Panc1 (cell line): ENCODE measurements at regions of chr13 and their contacts with region 1.

Region 1: GRCh38 chr13:79533781-79534400 is 52.9 kb downstream of the NDFIP2 start:
- DNase-seq: no peak
- ATAC-seq: no peak
- H3K4me3 ChIP-seq: no peak overlapping the region
- H3K27ac ChIP-seq: no peak overlapping the region
- H3K4me1 ChIP-seq: no peaks in the 10 kb centered on the region
- H3K27me3 ChIP-seq: no peaks in the 10 kb centered on the region
- CTCF ChIP-seq: no peak

Region 2: DNA sequence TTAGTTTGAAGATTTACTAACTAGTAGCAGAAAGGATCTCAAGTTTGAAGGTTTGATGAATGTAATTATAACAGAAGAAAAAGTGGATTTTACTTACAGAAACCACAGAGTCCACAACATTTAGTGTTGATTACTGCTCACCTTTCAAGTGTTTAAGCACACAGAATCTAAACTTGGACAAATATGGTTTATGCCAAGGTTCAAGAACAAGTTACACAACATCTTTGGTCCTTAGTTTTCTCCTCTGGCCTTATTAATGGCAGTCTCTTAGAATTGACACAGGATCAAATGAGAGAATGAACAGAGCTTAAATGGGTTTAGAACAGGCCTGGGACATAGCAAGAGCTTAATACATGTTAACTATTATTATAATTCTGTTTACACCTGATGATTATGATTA is 260.8 kb before region 1 on chr13:
- CTCF ChIA-PET with region 1: no interaction called
- POLR2A ChIA-PET with region 1: no interaction called
- in situ Hi-C with region 1: no loop called
- intact Hi-C with region 1: no loop called
- DNase-seq: no peak
- ATAC-seq: no peak
- H3K4me3 ChIP-seq: no peak overlapping the region
- H3K27ac ChIP-seq: no peak overlapping the region
- H3K4me1 ChIP-seq: no peaks in the 10 kb centered on the region
- H3K27me3 ChIP-seq: no peaks in the 10 kb centered on the region
- CTCF ChIP-seq: no peak

Region 3: DNA sequence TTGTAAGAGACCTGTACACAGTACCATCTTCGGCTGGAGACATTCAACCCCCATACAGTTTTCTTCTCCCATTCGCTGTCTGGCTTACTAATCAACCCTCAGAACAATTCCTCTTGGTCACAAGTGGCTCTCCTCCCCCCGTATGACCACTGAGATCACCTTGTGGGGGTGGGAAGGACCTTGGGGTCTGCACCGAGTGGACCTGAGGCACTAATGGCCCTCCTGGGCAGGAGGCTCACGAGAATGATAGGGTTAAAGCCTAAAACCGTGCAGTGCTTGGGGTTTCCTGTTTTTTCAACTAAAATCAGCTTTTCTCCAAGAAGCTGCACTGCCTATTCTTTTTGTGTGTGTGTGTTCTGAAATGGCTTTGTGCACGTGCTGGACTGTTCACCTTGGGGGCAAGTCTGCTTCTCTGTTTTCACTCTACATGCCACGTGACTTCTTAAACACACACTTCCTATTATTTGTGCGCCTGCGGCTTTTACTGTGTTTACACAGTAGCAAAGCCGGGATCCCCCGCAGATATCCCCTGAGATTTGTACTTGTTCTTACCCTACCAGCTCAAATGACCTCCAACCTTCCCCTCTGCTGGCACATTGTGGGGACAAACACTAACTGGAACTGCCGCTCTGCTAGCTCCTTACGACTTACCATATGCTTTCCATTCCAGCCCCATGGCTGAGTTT is 140.2 kb before region 1 on chr13:
- CTCF ChIA-PET with region 1: no interaction called
- POLR2A ChIA-PET with region 1: no interaction called
- in situ Hi-C with region 1: no loop called
- intact Hi-C with region 1: no loop called
- DNase-seq: no peak
- ATAC-seq: peak; percentile 89
- H3K4me3 ChIP-seq: peak overlapping the region in 1 of 2 experiments; percentile 31; a peak in 2 of 4 replicates
- H3K27ac ChIP-seq: peak overlapping the region; percentile 61
- H3K4me1 ChIP-seq: peaks cover 21% of the 10 kb centered on the region
- H3K27me3 ChIP-seq: no peaks in the 10 kb centered on the region
- CTCF ChIP-seq: no peak

Region 4: GRCh38 chr13:79440958-79441528 is 92.8 kb before region 1 on chr13:
- CTCF ChIA-PET with region 1: no interaction called
- POLR2A ChIA-PET with region 1: no interaction called
- in situ Hi-C with region 1: no loop called
- intact Hi-C with region 1: loop called (anchors 5 kb)
- DNase-seq: no peak
- ATAC-seq: no peak
- H3K4me3 ChIP-seq: no peak overlapping the region
- H3K27ac ChIP-seq: no peak overlapping the region
- H3K4me1 ChIP-seq: no peaks in the 10 kb centered on the region
- H3K27me3 ChIP-seq: no peaks in the 10 kb centered on the region
- CTCF ChIP-seq: no peak

Region 5: GRCh38 chr13:79637133-79637763 is 103.4 kb after region 1 on chr13:
- CTCF ChIA-PET with region 1: no interaction called
- POLR2A ChIA-PET with region 1: no interaction called
- in situ Hi-C with region 1: no loop called
- intact Hi-C with region 1: no loop called
- DNase-seq: no peak
- ATAC-seq: no peak
- H3K4me3 ChIP-seq: no peak overlapping the region
- H3K27ac ChIP-seq: no peak overlapping the region
- H3K4me1 ChIP-seq: no peaks in the 10 kb centered on the region
- H3K27me3 ChIP-seq: no peaks in the 10 kb centered on the region
- CTCF ChIP-seq: no peak